Gastrocnemius medialis (tissue), 4 donors: ENCODE measurements at regions of chr3 and their contacts with region 1.

Region 1: DNA sequence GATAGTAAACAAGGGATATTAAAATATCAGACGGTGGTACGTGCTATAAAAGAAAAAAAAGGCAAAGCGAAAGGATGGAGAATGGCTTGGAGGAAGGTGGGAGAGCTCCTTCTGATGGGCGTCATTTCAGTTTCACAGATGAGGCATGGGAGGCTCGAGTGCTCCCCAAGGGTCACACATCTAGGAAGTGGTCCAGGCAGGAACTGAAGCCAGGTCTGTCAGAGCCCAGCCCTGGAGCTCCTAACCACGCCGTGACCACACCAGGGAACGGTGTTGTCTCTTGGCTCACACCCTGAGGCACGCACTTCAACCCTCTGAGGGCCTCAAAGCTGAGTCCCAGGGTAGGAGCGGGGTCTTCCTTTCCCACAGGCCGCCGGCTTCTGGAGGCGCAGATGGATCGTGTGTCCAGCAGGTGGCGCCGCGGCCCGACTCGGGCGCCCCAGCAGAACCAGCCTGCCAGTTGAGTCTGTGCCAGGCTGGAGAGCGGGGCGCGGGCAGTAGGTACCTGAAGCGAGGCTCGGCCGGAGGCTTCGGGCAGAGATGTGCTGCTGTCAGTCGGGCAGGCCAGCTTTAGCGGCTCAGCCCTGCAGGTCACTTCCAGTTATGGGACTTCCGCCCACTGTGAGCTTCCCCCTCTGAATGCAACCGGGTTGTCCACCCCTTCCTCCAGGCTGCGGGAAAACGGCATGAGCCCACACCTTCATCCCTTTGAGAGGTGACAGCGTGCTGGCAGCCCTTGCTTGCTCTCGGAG is 68.1 kb downstream of the SLC6A1 start:
- DNase-seq: peak; percentile 8 to 16
- ATAC-seq: peak in 1 of 2 donors; percentile 45
- H3K4me3 ChIP-seq: peak overlapping the region; percentile 1 to 26 (median 12)
- H3K27ac ChIP-seq: no peak overlapping the region
- H3K4me1 ChIP-seq: peaks cover 0 to 3% of the 10 kb centered on the region in 2 donors
- H3K27me3 ChIP-seq: peaks cover 0 to 7% (median 0%) of the 10 kb centered on the region in 3 donors
- CTCF ChIP-seq: peak; percentile 57 to 85 (median 73)
- POLR2A ChIP-seq: no peak

Region 2: DNA sequence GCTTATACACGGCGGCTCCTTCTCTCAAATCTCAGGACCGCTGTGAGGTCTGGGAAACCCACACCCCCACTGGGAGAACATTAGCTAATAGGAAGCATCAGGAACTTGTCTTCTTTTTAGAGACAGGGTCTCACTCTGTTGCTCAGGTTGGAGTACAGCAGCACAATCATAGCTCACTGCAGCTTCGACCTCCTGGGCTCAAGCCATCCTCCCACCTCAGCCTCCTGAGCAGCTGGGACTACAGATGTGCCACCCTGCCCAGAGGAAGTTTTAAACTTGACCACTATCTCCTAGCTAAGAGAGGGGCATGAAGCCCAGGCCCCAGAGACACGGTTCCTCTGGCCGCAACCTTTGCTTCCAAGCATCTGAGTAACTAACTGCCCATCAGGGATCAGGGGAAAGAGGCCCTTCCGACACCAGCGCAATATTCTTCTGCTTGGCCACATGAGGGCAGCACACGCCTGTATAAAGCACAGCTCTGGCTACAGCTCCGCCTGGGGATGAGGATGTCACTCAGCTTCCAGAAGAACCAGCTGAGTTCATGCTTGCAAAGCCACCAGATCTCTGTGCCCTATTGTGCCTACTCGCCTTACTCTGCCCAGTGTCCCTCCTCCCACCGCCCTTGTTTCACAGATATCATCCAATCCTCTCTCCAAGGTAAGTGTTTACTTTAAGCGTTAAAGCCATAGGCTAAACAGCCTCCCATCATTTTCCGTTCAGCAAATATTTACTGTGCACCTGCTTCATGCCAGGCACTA is 302.2 kb before region 1 on chr3:
- in situ Hi-C with region 1: loop called in 3 of 4 experiments (anchors 10 to 25 kb)
- intact Hi-C with region 1: loop called (anchors 10 kb)
- DNase-seq: no peak
- ATAC-seq: peak; percentile 79 to 89
- H3K4me3 ChIP-seq: no peak overlapping the region
- H3K27ac ChIP-seq: no peak overlapping the region
- H3K4me1 ChIP-seq: no peaks in the 10 kb centered on the region
- H3K27me3 ChIP-seq: peaks cover 4 to 6% (median 5%) of the 10 kb centered on the region in 3 donors
- CTCF ChIP-seq: peak; percentile 32 to 67 (median 53)
- POLR2A ChIP-seq: no peak

Region 3: GRCh38 chr3:10945683-10946287 is 114.9 kb before region 1 on chr3:
- in situ Hi-C with region 1: loop called (anchors 5 to 10 kb)
- intact Hi-C with region 1: loop called (anchors 1 kb)
- DNase-seq: peak in 1 of 2 donors; percentile 22
- ATAC-seq: peak; percentile 42 to 78
- H3K4me3 ChIP-seq: no peak overlapping the region
- H3K27ac ChIP-seq: no peak overlapping the region
- H3K4me1 ChIP-seq: no peaks in the 10 kb centered on the region
- H3K27me3 ChIP-seq: peaks cover 0 to 10% (median 0%) of the 10 kb centered on the region in 3 donors
- CTCF ChIP-seq: peak; percentile 57 to 91 (median 89)
- POLR2A ChIP-seq: no peak

Region 4: DNA sequence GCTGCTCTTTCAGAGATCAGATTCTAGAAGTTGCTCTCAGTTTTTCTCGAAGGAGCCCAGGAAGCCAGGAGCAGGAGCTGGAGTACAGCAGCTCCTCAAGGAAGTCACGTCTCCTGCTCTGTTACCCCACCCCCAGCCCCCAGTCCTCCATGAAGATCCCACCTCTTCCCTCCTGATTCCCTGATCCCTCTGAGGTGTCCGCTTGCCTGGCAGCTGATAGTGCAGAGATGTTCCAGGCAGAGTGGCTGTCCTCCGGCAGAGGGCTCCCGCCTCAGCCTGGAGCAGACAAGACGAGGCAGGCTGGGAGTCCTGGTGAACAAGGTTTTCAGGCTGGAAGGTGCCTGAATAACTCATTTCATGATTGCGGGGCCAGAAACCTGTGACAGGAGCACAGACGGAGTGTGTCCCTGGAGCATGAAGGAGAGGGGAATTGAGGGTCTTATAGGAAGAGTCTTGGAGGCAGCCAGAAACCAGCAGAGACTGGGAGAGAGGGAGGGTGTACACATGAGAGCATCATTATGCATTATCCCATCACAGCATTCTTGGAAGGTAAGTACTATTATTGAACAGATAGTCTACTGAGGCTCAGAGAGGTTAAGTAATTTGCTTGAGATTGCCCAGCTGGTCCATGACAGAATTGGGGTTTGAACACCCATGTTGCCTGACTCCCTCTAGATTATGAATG is 94.8 kb after region 1 on chr3:
- in situ Hi-C with region 1: no loop called
- intact Hi-C with region 1: loop called (anchors 10 kb)
- DNase-seq: peak; percentile 19 to 48
- ATAC-seq: peak; percentile 68 to 80
- H3K4me3 ChIP-seq: peak overlapping the region; percentile 39 to 55 (median 51)
- H3K27ac ChIP-seq: peak overlapping the region in 1 of 4 donors; percentile 40
- H3K4me1 ChIP-seq: peaks cover 7 to 10% of the 10 kb centered on the region in 2 donors
- H3K27me3 ChIP-seq: peaks cover 23 to 33% (median 29%) of the 10 kb centered on the region in 3 donors
- CTCF ChIP-seq: peak; percentile 0 to 61 (median 53)
- POLR2A ChIP-seq: no peak

Region 5: GRCh38 chr3:11185564-11186317 is 125.1 kb after region 1 on chr3:
- in situ Hi-C with region 1: no loop called
- intact Hi-C with region 1: no loop called
- DNase-seq: peak; percentile 69 to 78
- ATAC-seq: peak; percentile 97
- H3K4me3 ChIP-seq: no peak overlapping the region
- H3K27ac ChIP-seq: peak overlapping the region; percentile 53 to 62 (median 56)
- H3K4me1 ChIP-seq: peaks cover 21 to 23% of the 10 kb centered on the region in 2 donors
- H3K27me3 ChIP-seq: no peaks in the 10 kb centered on the region
- CTCF ChIP-seq: no peak
- POLR2A ChIP-seq: no peak

Region 6: GRCh38 chr3:11204697-11205348 is 144.1 kb after region 1 on chr3:
- in situ Hi-C with region 1: no loop called
- intact Hi-C with region 1: loop called (anchors 2 kb)
- DNase-seq: no peak
- ATAC-seq: no peak
- H3K4me3 ChIP-seq: no peak overlapping the region
- H3K27ac ChIP-seq: no peak overlapping the region
- H3K4me1 ChIP-seq: peaks cover 0 to 10% of the 10 kb centered on the region in 2 donors
- H3K27me3 ChIP-seq: no peaks in the 10 kb centered on the region
- CTCF ChIP-seq: no peak
- POLR2A ChIP-seq: no peak

Region 7: DNA sequence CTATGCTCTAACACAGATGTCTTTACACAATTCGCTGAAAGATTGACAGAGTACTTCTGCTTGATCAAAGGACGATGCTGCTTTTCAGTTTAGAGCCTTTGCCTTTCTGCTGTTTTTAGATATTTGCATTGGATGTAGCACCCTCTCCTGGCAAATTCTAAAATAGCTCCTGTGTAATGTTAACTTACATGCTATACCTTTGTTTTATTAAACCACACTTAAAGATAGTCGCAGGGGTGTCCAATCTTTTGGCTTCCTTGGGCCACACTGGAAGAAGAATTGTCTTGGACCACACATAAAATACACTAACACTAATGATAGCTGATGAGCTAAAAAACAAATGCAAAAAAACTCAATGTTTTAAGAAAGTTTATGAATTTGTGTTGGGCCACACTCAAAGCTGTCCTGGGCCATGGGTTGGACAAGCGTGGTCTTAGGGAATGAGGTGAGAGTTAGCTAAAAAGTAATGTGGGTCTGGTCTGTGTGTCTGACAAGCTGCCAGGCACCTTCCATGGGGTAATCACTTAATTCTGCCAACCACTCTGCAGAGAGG is 274.5 kb after region 1 on chr3:
- in situ Hi-C with region 1: loop called in 3 of 4 experiments (anchors 10 to 25 kb)
- intact Hi-C with region 1: loop called (anchors 5 kb)
- DNase-seq: no peak
- ATAC-seq: peak; percentile 47 to 77
- H3K4me3 ChIP-seq: no peak overlapping the region
- H3K27ac ChIP-seq: no peak overlapping the region
- H3K4me1 ChIP-seq: no peaks in the 10 kb centered on the region
- H3K27me3 ChIP-seq: no peaks in the 10 kb centered on the region
- CTCF ChIP-seq: peak; percentile 38 to 66 (median 56)
- POLR2A ChIP-seq: no peak